A549 (cell line): ENCODE measurements at regions of chr12 and their contacts with region 1.

Region 1: GRCh38 chr12:3275171-3276041 is 198.2 kb downstream of the TSPAN9 start:
- DNase-seq: peak; percentile 62 to 69
- ATAC-seq: peak; percentile 75 to 92
- H3K4me3 ChIP-seq: no peak overlapping the region
- H3K27ac ChIP-seq: no peak overlapping the region
- H3K4me1 ChIP-seq: peaks cover 10% of the 10 kb centered on the region
- CTCF ChIP-seq: peak; percentile 94
- EP300 ChIP-seq: no peak
- POLR2A ChIP-seq: no peak
- RAD21 ChIP-seq: peak; percentile 92

Region 2: DNA sequence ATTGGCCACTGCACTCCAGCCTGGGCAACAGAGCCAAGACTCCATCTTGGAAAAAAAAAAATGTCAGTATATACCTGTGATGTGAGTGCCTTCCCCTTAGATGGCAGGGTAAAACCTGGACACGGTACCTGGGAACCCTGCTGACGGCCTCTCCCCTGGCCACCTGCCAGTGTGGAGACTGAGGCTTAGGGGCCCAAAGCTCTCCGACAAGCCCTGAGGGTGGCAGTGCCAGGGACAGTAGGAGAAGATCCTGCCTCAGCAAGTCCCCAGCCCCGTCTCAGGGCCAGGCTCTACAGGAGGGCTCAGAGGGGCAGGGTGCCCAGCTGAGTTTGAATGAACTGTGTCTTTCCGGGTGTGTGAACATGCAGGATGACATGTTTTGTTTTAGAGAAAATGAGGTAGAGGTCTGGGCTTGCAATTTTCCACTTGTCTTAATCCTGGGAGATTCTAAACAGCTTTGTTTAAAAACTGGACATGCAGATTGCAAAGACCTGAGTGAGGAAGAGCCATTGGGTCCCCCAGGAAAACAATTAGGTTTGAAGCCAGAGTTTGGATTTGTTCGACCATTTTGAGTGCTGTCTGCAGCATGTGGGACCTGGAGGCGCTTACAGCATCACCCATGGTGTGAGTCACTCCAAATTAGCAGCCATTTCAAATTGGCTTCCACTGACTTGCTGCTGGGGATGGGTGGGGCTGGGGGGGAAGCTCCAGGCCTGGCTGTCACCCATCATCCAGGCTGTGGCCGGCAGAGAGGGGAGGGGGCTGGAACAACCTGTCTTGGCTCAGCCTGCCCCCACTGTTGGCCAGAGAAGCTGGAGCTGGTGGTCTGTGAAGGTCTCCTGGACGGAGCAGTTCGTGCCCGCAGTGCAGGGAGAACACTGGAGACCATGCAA is 187.4 kb before region 1 on chr12:
- CTCF ChIA-PET with region 1: interaction called, 17 read pairs
- POLR2A ChIA-PET with region 1: no interaction called
- DNase-seq: no peak
- ATAC-seq: no peak
- H3K4me3 ChIP-seq: no peak overlapping the region
- H3K27ac ChIP-seq: no peak overlapping the region
- H3K4me1 ChIP-seq: no peaks in the 10 kb centered on the region
- CTCF ChIP-seq: no peak
- EP300 ChIP-seq: no peak
- POLR2A ChIP-seq: no peak
- RAD21 ChIP-seq: no peak

Region 3: DNA sequence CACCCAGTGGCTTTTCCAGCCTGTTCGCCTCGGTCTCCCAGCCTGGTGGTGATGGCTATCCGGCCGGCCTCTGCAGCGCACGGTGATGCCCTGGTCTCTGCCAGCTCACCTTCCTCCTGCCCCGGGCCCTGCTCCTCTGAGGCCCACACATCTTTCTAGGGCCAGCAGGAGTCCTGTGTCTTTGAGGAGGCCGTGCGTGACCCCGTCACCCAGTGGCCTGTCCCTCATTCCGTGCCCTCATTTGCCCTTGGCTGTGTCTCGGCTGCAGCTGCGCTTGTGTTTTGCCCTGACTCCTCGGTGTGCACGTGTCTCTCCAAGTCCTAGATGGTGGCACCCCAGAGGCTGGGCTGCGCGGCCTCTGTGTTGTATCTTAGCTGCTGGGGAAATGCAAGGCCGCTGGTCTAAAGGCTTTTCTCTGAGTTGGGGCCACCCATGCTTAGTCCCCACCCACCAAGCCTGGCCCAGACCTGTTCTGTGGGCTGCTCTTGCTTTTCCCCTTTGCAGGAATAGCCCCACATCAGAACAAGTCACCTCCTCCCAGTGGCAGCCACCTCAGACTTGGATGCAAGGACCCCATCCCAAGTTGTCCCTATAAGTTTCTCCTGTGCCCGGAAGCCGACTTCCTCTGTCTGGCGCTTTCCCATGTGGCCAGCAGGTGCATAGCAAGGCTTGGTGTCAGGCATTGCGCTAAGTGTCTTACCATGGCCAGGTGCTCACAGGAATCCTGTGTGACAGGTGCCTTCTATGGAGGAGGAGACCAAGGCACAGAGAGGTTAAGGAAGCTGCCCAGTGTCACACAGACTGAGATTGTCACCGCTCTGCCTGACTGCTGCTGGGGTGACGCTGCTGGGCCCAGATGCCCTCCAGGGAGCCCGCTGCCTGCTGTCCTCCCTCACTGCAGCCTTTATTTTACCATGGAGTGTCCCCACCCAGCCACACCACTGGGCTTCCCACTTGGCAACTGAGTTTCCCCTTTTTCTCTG is 133.8 kb before region 1 on chr12:
- CTCF ChIA-PET with region 1: interaction called, 353 read pairs
- POLR2A ChIA-PET with region 1: no interaction called
- DNase-seq: no peak
- ATAC-seq: peak in 1 of 2 experiments; percentile 55; a peak in 2 of 6 replicates
- H3K4me3 ChIP-seq: no peak overlapping the region
- H3K27ac ChIP-seq: no peak overlapping the region
- H3K4me1 ChIP-seq: peaks cover 7% of the 10 kb centered on the region; the same call in 1 of the 3 replicates
- CTCF ChIP-seq: no peak
- EP300 ChIP-seq: no peak
- POLR2A ChIP-seq: no peak
- RAD21 ChIP-seq: no peak

Region 4: DNA sequence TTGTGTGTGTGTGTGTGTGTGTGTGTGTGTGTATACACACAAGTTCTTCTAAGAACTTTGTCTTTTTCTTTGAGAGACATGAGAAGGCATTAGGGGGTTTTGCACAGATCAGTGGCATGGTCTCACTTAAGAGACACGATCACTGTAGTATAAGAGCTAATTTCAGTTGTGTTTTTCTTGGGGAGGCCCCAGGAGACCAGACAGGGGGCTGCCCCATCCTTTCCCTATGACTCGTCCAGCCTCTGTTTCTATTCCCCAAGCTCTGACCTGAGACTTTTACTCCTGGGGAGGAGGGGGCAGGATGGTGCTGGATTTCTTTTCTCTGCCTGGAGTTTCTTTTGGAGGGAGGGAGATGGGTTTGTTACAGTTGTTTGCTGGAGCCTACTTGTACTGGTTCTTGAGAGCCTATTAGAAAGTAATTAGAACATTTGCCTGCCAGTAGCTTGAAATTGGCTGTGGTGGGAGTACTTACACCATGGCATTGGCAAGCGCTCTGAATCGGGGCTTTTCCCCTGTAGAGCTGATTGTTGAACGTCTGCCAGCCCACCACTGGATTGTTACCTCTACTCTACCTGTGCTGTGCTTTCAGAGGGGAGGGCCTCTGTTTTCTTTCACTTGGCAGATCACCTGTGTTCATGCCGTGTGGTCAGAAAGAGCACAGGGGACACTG is 88.7 kb before region 1 on chr12:
- CTCF ChIA-PET with region 1: interaction called, 10 read pairs
- POLR2A ChIA-PET with region 1: no interaction called
- DNase-seq: no peak
- ATAC-seq: no peak
- H3K4me3 ChIP-seq: no peak overlapping the region
- H3K27ac ChIP-seq: no peak overlapping the region
- H3K4me1 ChIP-seq: 0 out of 3 replicates have a peak, but pooled peaks cover 3% of the 10 kb centered on the region
- CTCF ChIP-seq: no peak
- EP300 ChIP-seq: no peak
- POLR2A ChIP-seq: no peak
- RAD21 ChIP-seq: no peak

Region 5: DNA sequence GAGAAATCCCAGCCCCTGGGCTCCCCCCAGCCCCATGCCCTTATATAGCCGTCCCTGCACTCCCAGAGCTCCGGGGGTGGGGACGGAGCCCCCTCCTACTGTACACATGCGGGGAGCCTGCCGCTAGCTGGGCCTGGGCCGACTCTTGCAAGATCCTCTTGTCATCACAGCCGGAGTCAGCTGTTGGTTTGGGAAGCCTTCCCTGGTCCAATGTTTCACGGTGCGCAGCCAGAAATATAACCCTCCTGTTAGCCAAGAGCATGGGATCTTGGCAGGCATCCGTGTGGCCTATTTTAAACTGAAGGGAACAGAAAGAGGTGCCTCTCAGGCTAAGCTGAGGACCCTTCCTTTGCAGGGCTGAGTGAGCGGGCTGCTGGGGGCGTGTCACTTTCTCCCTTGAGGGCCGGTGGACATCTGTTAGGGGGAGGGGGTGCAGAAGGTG is 22.9 kb before region 1 on chr12:
- CTCF ChIA-PET with region 1: interaction called, 37 read pairs
- POLR2A ChIA-PET with region 1: no interaction called
- DNase-seq: no peak
- ATAC-seq: no peak
- H3K4me3 ChIP-seq: no peak overlapping the region
- H3K27ac ChIP-seq: no peak overlapping the region
- H3K4me1 ChIP-seq: no peaks in the 10 kb centered on the region
- CTCF ChIP-seq: no peak
- EP300 ChIP-seq: no peak
- POLR2A ChIP-seq: no peak
- RAD21 ChIP-seq: no peak